K562 (cell line): ENCODE measurements at regions of chr7 and their contacts with region 1.

Region 1: DNA sequence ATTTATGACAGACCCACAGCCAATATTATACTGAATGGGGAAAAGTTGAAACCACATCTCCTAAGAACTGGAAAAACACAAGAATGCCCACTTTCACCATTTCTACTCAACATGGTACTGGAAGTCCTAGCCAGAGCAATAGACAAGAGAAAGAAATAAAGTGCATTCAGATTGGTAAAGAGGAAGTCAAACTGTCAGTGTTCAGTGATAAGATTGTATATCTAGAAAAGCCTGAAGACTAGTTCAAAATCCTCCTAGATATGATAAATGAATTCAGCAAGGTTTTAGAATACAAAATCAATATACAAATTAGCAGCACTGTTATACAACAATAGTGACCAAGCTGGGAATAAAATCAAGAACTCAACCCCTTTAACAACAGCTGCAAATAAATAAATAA is 6.9 kb upstream of the ZNF138 start:
- DNase-seq: no peak
- ATAC-seq: peak; percentile 24; the same call in 2 of the 3 replicates
- H3K4me3 ChIP-seq: no peak overlapping the region
- H3K27ac ChIP-seq: no peak overlapping the region
- H3K4me1 ChIP-seq: peaks cover 0 to 16% of the 10 kb centered on the region in 2 experiments; a peak in 3 of 5 replicates
- H3K27me3 ChIP-seq: no peaks in the 10 kb centered on the region
- CTCF ChIP-seq: no peak
- EP300 ChIP-seq: no peak
- POLR2A ChIP-seq: no peak
- RAD21 ChIP-seq: no peak

Region 2: DNA sequence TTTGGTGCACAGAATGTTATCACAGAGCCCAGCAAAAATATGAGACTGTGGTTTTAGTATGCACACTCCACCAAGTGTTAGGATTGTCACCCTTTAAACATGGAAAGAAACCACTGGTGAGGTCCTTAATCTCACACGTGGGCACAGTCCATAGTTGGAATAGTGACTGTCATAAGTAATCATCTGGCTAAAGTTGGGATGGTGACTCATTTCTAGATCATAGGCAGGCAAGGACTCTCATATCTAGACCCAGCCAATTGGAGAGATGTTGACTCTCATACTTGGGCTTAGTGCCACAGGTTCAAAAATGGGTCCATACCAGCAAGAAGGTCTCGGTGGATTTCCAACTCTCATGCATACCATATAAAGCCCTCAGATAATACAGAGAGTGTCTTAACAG is 184.8 kb before region 1 on chr7:
- CTCF ChIA-PET with region 1: no interaction called
- POLR2A ChIA-PET with region 1: no interaction called
- in situ Hi-C with region 1: no loop called
- intact Hi-C with region 1: no loop called
- DNase-seq: no peak
- ATAC-seq: no peak
- H3K4me3 ChIP-seq: no peak overlapping the region
- H3K27ac ChIP-seq: no peak overlapping the region
- H3K4me1 ChIP-seq: no peaks in the 10 kb centered on the region
- H3K27me3 ChIP-seq: no peaks in the 10 kb centered on the region
- CTCF ChIP-seq: no peak
- EP300 ChIP-seq: no peak
- POLR2A ChIP-seq: no peak
- RAD21 ChIP-seq: no peak

Region 3: GRCh38 chr7:64665980-64666662 is 121.2 kb before region 1 on chr7 and contains the start of gene ZNF107:
- CTCF ChIA-PET with region 1: no interaction called
- POLR2A ChIA-PET with region 1: no interaction called
- in situ Hi-C with region 1: no loop called
- intact Hi-C with region 1: loop called (anchors 5 kb)
- DNase-seq: peak; percentile 93 to 97 (median 94)
- ATAC-seq: peak; percentile 99
- H3K4me3 ChIP-seq: peak within 1 kb of the TSS; percentile 97
- H3K27ac ChIP-seq: peak within 1 kb of the TSS; percentile 87
- H3K4me1 ChIP-seq: peaks cover 6 to 13% of the 10 kb centered on the region in 2 experiments
- H3K27me3 ChIP-seq: no peaks in the 10 kb centered on the region
- CTCF ChIP-seq: no peak
- EP300 ChIP-seq: no peak
- POLR2A ChIP-seq: peak; percentile 90
- RAD21 ChIP-seq: 0 out of 4 replicates have a peak, but pooled peaks of 1 of the 2 experiments have one; percentile 9
- polyA plus RNA-seq, gene ZNF107: 2.4 to 4.5 TPM

Region 4: DNA sequence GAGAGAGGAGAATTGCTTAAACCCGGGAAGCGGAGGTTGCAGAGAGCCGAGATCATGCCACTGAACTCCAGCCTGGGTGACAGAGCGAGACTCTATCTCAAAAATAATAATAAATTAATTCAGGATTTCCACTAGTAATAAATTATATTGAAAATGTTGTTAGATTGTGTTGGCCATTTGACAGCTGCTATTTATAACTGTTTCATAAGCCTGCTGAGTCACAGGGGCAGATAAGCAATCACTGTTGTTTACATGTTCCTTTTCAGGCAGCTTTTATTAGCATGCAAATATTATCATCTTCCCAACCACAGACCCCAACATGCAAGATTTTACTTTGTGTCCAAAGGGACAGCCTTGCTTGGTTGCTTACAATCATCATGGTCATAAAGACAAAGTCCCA is 42.6 kb before region 1 on chr7:
- CTCF ChIA-PET with region 1: no interaction called
- POLR2A ChIA-PET with region 1: no interaction called
- in situ Hi-C with region 1: no loop called
- intact Hi-C with region 1: no loop called
- DNase-seq: no peak
- ATAC-seq: peak; percentile 38; the same call in 2 of the 3 replicates
- H3K4me3 ChIP-seq: no peak overlapping the region
- H3K27ac ChIP-seq: no peak overlapping the region
- H3K4me1 ChIP-seq: no peaks in the 10 kb centered on the region
- H3K27me3 ChIP-seq: no peaks in the 10 kb centered on the region
- CTCF ChIP-seq: no peak
- EP300 ChIP-seq: peak; percentile 50
- POLR2A ChIP-seq: no peak
- RAD21 ChIP-seq: no peak

Region 5: DNA sequence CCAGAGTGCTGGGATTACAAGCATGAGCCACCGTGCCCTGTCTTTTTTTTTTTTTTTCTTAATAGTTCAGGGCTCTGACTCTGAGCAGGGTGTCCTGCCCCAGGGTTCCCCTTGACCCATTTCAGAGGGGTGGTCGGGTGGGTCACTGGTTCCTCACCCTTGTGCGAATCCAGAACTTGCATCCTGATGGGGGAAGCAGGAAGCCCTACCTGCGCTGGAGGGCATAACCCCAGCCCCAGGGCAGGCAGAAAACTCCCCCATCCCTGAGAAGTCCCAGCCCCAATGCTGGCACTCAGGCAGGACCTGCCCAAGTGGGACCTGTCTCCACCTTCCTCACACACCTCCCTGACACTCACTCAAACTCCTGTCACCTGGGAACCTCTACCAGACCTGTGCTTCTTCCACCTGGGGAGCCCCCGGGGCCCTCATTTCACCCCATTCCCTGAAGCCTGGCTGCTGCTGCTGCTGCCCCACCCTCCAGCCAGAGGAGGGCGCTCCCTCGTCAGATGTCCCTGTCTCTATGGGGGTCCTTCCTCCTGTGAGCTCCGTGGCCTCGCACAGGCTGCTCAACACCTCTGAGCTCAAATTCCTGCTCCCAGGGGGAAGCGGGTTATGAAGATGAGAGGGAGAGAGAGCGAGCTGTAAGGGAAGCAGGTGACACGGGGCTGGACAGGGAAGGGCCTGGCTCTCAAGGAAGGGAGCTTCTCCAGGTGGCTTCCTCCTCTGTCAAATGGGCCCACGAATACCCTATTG is 100.6 kb after region 1 on chr7:
- CTCF ChIA-PET with region 1: no interaction called
- POLR2A ChIA-PET with region 1: no interaction called
- in situ Hi-C with region 1: no loop called
- intact Hi-C with region 1: no loop called
- DNase-seq: peak in 1 of 4 experiments; percentile 33
- ATAC-seq: no peak
- H3K4me3 ChIP-seq: no peak overlapping the region
- H3K27ac ChIP-seq: no peak overlapping the region
- H3K4me1 ChIP-seq: peaks cover 34 to 49% of the 10 kb centered on the region in 2 experiments; a peak in 4 of 5 replicates
- H3K27me3 ChIP-seq: no peaks in the 10 kb centered on the region
- CTCF ChIP-seq: peak; percentile 39 to 47 (median 44); a peak in 5 of 6 replicates
- EP300 ChIP-seq: no peak
- POLR2A ChIP-seq: no peak
- RAD21 ChIP-seq: no peak